Sciatic nerve (tissue), 2 donors: ENCODE measurements at regions of chr13 and their contacts with region 1.

Region 1: DNA sequence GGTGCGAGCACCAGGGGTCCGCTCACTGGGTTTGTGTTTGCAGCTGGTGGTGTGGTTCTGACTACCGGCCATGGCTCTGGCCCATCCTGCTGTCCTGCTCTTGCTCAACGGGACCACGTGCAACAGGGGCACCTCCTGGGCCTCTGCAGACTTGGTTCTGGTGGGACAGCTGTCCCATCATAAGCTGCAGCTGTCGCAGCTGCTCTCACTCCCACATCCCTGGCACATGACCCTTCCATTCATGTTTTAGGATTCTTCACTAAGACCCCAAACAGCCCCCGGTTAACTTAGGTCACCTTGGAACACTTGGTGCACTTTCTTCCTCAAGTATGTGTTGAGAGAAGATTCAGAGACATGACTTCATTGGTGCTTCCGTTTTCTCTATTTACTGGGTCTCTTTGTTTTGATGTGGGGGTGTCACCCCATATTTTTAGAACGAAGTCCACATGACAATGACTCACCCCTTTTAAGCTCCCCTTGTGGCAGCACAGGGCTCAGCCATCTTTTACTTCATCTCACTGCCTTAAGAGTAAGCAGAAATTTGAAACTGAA is 68.4 kb upstream of the ARHGEF7 start:
- DNase-seq: no peak
- ATAC-seq: no peak

Region 2: DNA sequence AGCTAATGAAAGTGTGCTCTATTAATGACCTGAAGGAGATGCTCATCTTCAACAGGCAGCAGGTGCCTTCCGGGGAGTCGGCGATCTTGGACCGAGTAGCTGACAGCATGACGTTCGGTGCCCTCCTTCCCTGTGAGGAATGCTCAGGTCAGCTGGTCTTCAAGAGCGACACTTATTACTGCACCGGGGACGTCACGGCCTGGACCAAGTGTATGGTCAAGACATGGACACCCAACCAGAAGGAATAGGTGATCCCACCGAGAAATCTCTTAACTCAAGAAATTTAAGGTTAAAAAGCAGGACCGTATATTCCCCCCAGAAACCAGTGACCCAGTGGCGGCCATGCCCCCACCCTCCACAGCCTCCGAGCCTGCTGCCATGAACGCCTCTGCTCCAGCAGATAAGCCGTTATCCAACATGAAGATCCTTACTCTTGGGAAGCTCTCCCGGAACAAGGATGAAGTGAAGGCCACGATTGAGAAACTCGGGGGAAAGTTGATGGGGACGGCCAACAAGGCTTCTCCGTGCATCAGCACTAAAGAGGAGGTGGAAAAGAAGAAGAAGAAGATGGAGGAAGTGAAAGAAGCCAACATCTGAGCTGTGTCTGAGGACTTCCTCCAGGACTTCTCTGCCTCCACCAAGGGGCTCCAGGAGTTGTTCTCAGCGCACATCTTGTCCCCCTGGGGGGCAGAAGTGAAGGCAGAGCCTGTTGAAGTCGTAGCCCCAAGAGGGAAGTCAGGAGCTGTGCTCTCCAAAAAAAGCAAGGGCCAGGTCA is 109.0 kb before region 1 on chr13:
- intact Hi-C with region 1: loop called (anchors 10 kb)
- DNase-seq: no peak
- ATAC-seq: no peak